GM10248 (cell line): ENCODE measurements at regions of chr2 and their contacts with region 1.

Region 1: GRCh38 chr2:200829258-200829655 is 17.5 kb downstream of the BZW1 start:
- DNase-seq: no peak
- CTCF ChIP-seq: no peak

Region 2: DNA sequence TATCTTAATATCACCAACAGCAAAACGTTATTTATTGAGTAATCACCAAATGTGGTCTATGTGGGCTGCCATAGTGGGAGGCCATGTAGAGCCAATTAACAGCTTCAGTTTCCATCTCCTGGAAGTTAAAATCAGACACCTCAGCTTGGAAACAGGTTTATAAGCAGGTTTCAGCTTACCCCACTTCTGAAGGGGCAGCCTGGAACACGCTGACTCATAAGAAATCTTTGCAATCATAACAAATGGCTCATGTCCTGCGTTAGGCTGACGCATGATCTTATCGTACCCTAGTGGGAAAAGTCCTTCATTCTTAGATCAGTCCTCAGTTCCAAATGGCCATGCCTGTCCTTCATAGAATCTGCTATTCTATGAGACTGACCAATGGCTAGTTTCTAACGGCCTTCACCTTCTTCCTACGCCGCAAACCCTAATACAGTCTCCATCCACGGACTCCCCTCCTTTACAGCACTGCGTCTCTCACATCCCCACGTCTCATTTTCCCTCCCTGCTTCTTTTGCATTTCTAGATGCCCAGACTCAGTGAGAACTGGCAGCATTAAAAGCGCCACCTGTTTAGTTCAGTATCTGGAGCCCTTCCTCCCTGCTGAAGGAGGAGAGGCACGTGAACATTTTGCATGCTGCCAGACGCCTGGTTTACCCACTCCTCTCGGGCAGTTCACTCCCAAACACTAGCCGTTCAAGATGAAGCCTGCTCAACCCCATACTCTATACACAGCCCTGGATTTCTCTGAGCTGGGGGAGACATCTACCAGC is 41.7 kb before region 1 on chr2:
- CTCF ChIA-PET with region 1: no interaction called
- POLR2A ChIA-PET with region 1: no interaction called
- DNase-seq: no peak
- CTCF ChIP-seq: no peak

Region 3: GRCh38 chr2:200850512-200851256 is 21.4 kb after region 1 on chr2:
- CTCF ChIA-PET with region 1: interaction called, 17 read pairs
- POLR2A ChIA-PET with region 1: interaction called, 10 read pairs
- DNase-seq: no peak
- CTCF ChIP-seq: no peak